ENCODE measurements at regions of chrX and their contacts with region 1.

Region 1: DNA sequence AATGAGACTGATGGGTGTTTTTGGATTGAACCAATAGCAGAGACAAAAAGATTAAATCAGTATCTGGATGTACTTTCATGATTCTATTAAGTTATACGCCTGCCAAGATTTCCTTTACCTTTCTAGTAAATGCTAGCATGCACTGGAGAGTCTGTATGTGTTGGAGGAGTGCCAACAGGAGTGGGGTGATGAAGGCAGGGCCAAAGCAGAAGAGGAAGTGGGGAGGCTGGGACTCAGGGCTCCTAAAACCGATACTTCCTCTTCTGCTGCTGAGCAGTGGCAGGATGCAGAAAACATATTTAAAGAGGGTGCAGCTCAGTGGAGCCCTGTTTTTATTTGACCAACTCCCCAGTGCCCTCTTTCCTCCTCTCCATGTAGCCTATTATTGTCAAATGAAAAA is 5.6 kb downstream of the CYSLTR1 start:
- DNase-seq: peak; percentile 63
- H3K4me3 Mint-ChIP-seq: peak overlapping the region; percentile 32
- H3K27ac Mint-ChIP-seq: peak overlapping the region; percentile 85
- H3K4me1 Mint-ChIP-seq: peaks cover 36% of the 10 kb centered on the region
- H3K27me3 Mint-ChIP-seq: no peaks in the 10 kb centered on the region

Region 2: GRCh38 chrX:78165425-78165824 is 156.4 kb before region 1 on chrX:
- CTCF ChIA-PET with region 1: no interaction called
- intact Hi-C with region 1: no loop called
- DNase-seq: no peak
- H3K4me3 Mint-ChIP-seq: no peak overlapping the region
- H3K27ac Mint-ChIP-seq: no peak overlapping the region
- H3K4me1 Mint-ChIP-seq: peaks cover 10% of the 10 kb centered on the region
- H3K27me3 Mint-ChIP-seq: no peaks in the 10 kb centered on the region

Region 3: DNA sequence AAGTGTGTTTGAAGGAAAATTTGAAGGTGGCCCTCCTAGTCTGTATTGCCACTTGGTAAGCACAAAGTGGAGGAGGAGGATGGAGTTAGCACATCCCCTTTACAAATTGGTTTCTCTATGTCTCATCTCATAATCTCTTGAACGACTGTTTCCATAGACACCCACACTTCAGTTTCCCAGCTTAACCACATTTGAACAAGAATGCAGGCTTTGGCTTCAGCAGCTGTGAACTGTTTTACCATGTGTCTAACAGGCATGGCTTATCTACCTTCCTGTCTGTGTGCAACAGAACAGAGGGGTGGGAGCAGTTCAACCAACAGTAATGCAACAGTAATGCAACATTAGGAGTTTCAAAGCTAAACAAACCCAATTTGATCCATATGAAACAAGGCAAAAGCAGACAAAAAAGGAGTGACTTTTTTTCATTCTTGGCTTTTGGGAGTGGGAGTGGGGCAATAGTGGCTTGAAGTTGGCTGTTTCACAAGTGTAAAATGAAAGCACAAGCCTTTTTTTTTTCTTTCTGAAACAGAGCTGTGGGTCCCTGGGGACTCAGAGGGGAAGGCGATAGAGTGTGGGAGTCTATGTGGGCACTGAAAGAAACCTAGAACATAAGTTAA is 937.4 kb after region 1 on chrX:
- CTCF ChIA-PET with region 1: no interaction called
- intact Hi-C with region 1: loop called (anchors 5 kb)
- DNase-seq: peak; percentile 68
- H3K4me3 Mint-ChIP-seq: peak overlapping the region; percentile 58
- H3K27ac Mint-ChIP-seq: peak overlapping the region; percentile 91
- H3K4me1 Mint-ChIP-seq: peaks cover 83% of the 10 kb centered on the region
- H3K27me3 Mint-ChIP-seq: no peaks in the 10 kb centered on the region

Measured in activated naive CD4-positive, alpha-beta T cell treated with anti-CD3 and anti-CD28 coated beads for 36 hours (primary cell).